HepG2 (cell line): ENCODE measurements at regions of chr2 and their contacts with region 1.

Region 1: DNA sequence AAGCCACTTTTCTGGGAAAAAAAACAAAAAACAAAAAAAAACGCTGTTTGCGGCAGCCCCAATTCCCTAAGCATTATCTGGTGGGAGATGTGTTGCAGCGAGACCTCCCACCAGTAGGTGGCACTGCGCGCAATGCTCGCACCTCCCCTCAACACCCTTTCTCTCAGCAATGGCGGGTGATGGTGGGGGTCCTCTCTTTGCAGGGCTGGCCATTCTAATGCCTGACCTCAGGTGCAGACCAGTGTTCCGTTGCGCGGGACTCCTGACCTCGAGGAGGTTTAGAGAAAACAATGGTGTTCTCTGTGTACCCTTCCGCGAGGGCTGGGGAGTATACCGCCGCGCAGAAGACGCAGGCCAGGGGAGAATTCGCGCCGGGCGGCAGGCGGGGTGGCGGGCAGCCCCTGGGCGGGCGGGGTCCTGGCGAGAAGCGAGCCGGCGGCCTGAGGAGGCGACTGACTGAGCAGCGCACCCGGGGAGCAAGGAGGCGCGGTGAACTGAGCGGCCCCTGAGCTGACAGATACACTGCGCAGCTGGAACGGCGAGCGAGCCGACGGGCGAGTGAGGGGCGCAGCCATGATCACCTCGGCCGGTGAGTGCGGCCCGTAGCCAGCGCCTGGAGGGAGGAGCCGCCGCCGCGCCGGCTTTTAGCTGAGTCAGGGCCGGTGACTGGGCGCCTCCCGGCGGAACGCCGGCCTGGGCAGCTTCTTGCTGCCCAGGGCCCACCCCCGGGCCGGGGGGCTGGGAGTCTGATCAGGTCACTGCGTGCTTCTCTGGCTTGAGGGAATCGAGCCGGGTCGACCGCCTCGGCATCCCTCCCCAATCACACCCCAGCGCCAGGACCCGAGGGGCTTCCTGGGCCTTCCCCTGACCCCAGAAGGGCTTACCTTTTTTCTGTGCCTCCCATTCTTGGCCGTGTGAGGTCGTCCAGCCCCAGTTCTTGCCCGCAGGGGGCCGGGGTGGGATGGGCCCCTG is at the start of gene PSMD1:
- DNase-seq: peak; percentile 91
- ATAC-seq: peak; percentile 71
- H3K4me3 ChIP-seq: peak within 1 kb of the TSS; percentile 83 to 99 (median 96)
- H3K27ac ChIP-seq: peak within 1 kb of the TSS; percentile 95
- H3K4me1 ChIP-seq: peaks cover 57% of the 10 kb centered on the region
- H3K27me3 ChIP-seq: no peaks in the 10 kb centered on the region; a peak in 1 of 5 replicates
- CTCF ChIP-seq: peak; percentile 95
- EP300 ChIP-seq: peak in 1 of 2 experiments; percentile 28; a peak in 1 of 4 replicates
- POLR2A ChIP-seq: peak in 1 of 2 experiments; percentile 86; a peak in 2 of 4 replicates
- RAD21 ChIP-seq: peak; percentile 62
- total RNA-seq, gene PSMD1: 191 and 287 TPM in 2 replicates

Region 2: DNA sequence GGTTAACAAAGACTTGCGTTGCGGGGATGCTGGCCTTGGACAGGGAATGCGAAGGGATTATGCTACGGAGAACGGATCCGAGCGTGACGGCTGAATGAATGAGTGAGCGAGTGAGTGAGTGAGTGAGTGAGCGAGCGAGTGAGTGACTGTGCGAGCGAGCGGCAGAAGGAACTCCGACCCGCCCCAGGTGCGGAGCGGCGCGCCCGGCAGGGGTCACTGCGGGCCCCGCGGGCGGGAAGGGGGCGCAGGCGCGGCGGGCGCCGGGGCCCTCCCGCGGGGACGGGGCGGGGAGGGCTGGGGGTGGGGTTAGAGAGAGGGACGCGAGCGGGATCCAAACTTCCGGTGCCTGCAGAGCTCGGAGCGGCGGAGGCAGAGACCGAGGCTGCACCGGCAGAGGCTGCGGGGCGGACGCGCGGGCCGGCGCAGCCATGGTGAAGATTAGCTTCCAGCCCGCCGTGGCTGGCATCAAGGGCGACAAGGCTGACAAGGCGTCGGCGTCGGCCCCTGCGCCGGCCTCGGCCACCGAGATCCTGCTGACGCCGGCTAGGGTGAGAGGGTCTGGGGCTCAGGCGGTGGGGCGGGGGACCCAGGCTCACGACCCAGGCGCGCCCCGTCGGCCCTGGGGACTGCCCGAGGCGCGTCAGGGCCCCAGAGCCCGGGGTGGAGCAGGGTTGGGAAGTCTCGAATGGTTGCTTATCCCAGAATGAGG is 192.0 kb before region 1 on chr2 and contains the start of gene ITM2C:
- CTCF ChIA-PET with region 1: no interaction called
- POLR2A ChIA-PET with region 1: no interaction called
- in situ Hi-C with region 1: no loop called
- intact Hi-C with region 1: loop called (anchors 10 kb)
- DNase-seq: peak; percentile 59
- ATAC-seq: peak; percentile 86
- H3K4me3 ChIP-seq: peak within 1 kb of the TSS; percentile 91 to 99 (median 97)
- H3K27ac ChIP-seq: peak within 1 kb of the TSS; percentile 31
- H3K4me1 ChIP-seq: peaks cover 33% of the 10 kb centered on the region
- H3K27me3 ChIP-seq: peaks cover 0 to 16% of the 10 kb centered on the region in 2 experiments; a peak in 2 of 5 replicates
- CTCF ChIP-seq: peak; percentile 73
- EP300 ChIP-seq: no peak
- POLR2A ChIP-seq: peak; percentile 66 to 93
- RAD21 ChIP-seq: no peak
- total RNA-seq, gene ITM2C: 40.7 and 70.5 TPM in 2 replicates

Region 3: DNA sequence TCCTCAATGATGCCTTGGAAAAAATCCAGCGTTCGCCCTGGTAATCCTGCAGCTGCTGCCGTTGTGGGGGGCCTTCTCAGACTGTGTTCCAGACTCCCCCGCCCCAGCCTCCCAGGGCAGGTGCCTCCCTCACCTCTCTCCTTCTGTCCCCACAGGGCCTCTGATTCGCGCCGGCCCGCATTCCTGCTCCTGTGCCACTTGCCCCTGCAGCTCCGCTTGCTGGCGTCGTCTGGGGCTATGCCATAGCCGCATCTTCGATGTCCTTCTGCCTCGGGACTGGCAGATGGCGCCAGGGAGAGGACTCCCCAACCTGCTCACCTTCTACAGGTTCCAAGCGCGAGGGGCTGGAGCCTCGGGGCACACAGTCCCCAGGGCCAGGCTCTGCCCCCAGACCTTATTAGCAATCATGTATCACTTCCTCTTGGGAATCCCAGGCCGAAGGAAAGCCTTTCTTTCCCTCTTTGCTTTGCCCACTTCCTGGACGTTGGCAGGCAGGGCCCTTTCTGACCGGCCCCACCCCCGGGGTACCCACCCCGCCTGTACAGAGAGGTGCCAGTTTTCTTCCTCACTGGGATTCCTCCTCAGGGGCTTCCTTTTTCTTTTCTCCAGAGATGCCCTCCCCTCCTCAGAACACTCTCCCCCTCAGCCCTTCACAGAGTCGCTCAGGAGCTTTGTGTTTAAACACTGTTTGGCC is 56.4 kb before region 1 on chr2:
- CTCF ChIA-PET with region 1: interaction called, 10 read pairs
- POLR2A ChIA-PET with region 1: interaction called, 40 read pairs
- in situ Hi-C with region 1: loop called (anchors 5 kb)
- intact Hi-C with region 1: loop called (anchors 1 kb)
- DNase-seq: peak; percentile 54
- ATAC-seq: peak; percentile 92
- H3K4me3 ChIP-seq: no peak overlapping the region
- H3K27ac ChIP-seq: no peak overlapping the region
- H3K4me1 ChIP-seq: peaks cover 24% of the 10 kb centered on the region
- H3K27me3 ChIP-seq: peaks cover 0 to 35% of the 10 kb centered on the region in 2 experiments; a peak in 2 of 5 replicates
- CTCF ChIP-seq: peak; percentile 88
- EP300 ChIP-seq: no peak
- POLR2A ChIP-seq: no peak
- RAD21 ChIP-seq: peak; percentile 85

Region 4: DNA sequence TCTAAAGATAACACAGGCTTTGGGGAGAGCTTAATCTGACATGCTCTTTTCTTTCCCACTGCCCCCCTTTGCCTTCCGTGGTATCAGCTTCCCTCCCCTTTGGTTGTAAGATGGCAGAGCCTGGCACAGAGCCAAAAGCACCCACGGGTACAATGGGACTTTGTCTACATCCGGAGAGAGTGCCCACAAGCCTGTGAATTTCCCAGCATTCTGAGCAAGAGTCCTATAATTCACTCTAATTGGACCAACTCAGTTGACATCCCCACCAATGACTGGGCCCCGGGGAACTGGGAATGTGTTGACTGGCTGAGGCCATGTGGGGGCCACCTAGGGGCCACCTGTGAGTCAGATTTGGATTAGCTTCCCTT is 39.5 kb before region 1 on chr2:
- CTCF ChIA-PET with region 1: no interaction called
- POLR2A ChIA-PET with region 1: interaction called, 41 read pairs
- in situ Hi-C with region 1: no loop called
- intact Hi-C with region 1: no loop called
- DNase-seq: no peak
- ATAC-seq: peak; percentile 49
- H3K4me3 ChIP-seq: no peak overlapping the region
- H3K27ac ChIP-seq: no peak overlapping the region
- H3K4me1 ChIP-seq: peaks cover 13% of the 10 kb centered on the region; the same call in 1 of the 2 replicates
- H3K27me3 ChIP-seq: peaks cover 0 to 27% of the 10 kb centered on the region in 2 experiments; a peak in 4 of 5 replicates
- CTCF ChIP-seq: no peak
- EP300 ChIP-seq: no peak
- POLR2A ChIP-seq: no peak
- RAD21 ChIP-seq: no peak

Region 5: GRCh38 chr2:231093933-231094332 is 37.2 kb after region 1 on chr2:
- CTCF ChIA-PET with region 1: no interaction called
- POLR2A ChIA-PET with region 1: no interaction called
- in situ Hi-C with region 1: no loop called
- intact Hi-C with region 1: no loop called
- DNase-seq: no peak
- ATAC-seq: no peak
- H3K4me3 ChIP-seq: no peak overlapping the region
- H3K27ac ChIP-seq: no peak overlapping the region
- H3K4me1 ChIP-seq: no peaks in the 10 kb centered on the region
- H3K27me3 ChIP-seq: no peaks in the 10 kb centered on the region
- CTCF ChIP-seq: no peak
- EP300 ChIP-seq: no peak
- POLR2A ChIP-seq: no peak
- RAD21 ChIP-seq: no peak

Region 6: GRCh38 chr2:231191896-231192872 is 135.4 kb after region 1 on chr2:
- CTCF ChIA-PET with region 1: no interaction called
- POLR2A ChIA-PET with region 1: no interaction called
- in situ Hi-C with region 1: no loop called
- intact Hi-C with region 1: loop called (anchors 5 kb)
- DNase-seq: peak; percentile 70
- ATAC-seq: peak; percentile 75
- H3K4me3 ChIP-seq: peak overlapping the region in 1 of 3 experiments; percentile 43; a peak in 1 of 6 replicates
- H3K27ac ChIP-seq: no peak overlapping the region
- H3K4me1 ChIP-seq: peaks cover 46% of the 10 kb centered on the region
- H3K27me3 ChIP-seq: peaks cover 0 to 1% of the 10 kb centered on the region in 2 experiments; a peak in 2 of 5 replicates
- CTCF ChIP-seq: peak; percentile 88
- EP300 ChIP-seq: no peak
- POLR2A ChIP-seq: no peak
- RAD21 ChIP-seq: peak; percentile 67